H1 (cell line): ENCODE measurements at regions of chr1 and their contacts with region 1.

Region 1: DNA sequence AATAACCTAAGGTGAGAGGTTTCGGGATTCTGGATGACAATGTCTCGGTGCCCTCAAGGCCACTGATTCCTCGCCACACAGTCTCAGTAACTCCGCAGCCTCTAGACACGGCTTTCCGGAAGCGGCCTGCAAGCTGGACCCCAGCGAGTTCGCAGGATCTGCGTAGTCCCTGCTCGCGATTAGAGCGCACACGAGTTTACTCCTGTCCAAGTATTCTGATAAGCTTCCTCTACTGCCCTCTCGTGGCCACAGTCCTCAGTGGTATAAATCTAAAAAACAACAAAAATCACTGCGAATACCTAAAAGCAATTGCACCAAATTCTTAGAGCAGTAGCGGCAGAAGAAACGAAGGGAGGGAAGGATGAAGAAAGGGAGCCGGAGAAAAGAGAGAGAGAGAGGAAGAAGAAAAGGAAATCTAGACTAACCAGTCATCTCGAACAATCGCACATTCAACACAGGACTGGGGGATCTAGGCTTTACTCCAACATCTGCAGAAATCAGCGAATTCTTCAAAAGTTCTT is 1.1 kb upstream of the PLXNA2 start:
- DNase-seq: peak in 1 of 2 experiments; percentile 87
- H3K4me3 ChIP-seq: peak overlapping the region in 3 of 4 experiments; percentile 43 to 70 (median 44); a peak in 5 of 8 replicates
- H3K27ac ChIP-seq: no peak overlapping the region
- H3K4me1 ChIP-seq: peaks cover 0 to 11% (median 5%) of the 10 kb centered on the region in 4 experiments; a peak in 5 of 7 replicates
- H3K27me3 ChIP-seq: peaks cover 16 to 44% (median 36%) of the 10 kb centered on the region in 4 experiments
- CTCF ChIP-seq: peak; percentile 21 to 78 (median 76)
- EP300 ChIP-seq: no peak
- POLR2A ChIP-seq: no peak
- RAD21 ChIP-seq: peak; percentile 78 to 82

Region 2: GRCh38 chr1:208036109-208036808 is 209.0 kb before region 1 on chr1:
- CTCF ChIA-PET with region 1: interaction called, 315 read pairs
- POLR2A ChIA-PET with region 1: no interaction called
- DNase-seq: no peak
- H3K4me3 ChIP-seq: no peak overlapping the region
- H3K27ac ChIP-seq: no peak overlapping the region
- H3K4me1 ChIP-seq: peaks cover 0 to 3% (median 0%) of the 10 kb centered on the region in 4 experiments; a peak in 1 of 7 replicates
- H3K27me3 ChIP-seq: no peaks in the 10 kb centered on the region
- CTCF ChIP-seq: peak; percentile 34 to 69 (median 55)
- EP300 ChIP-seq: no peak
- POLR2A ChIP-seq: no peak
- RAD21 ChIP-seq: peak; percentile 60 to 68

Region 3: GRCh38 chr1:208093754-208094719 is 151.2 kb before region 1 on chr1:
- CTCF ChIA-PET with region 1: interaction called, 41 read pairs
- POLR2A ChIA-PET with region 1: no interaction called
- DNase-seq: peak; percentile 39 to 90
- H3K4me3 ChIP-seq: no peak overlapping the region
- H3K27ac ChIP-seq: no peak overlapping the region
- H3K4me1 ChIP-seq: peaks cover 1 to 7% (median 4%) of the 10 kb centered on the region in 4 experiments; a peak in 5 of 7 replicates
- H3K27me3 ChIP-seq: no peaks in the 10 kb centered on the region
- CTCF ChIP-seq: peak; percentile 88 to 94 (median 89)
- EP300 ChIP-seq: no peak
- POLR2A ChIP-seq: no peak
- RAD21 ChIP-seq: peak; percentile 76 to 85

Region 4: GRCh38 chr1:208115924-208116640 is 129.2 kb before region 1 on chr1:
- CTCF ChIA-PET with region 1: interaction called, 18 read pairs
- POLR2A ChIA-PET with region 1: no interaction called
- DNase-seq: no peak
- H3K4me3 ChIP-seq: no peak overlapping the region
- H3K27ac ChIP-seq: no peak overlapping the region
- H3K4me1 ChIP-seq: peaks cover 0 to 7% (median 2%) of the 10 kb centered on the region in 4 experiments; a peak in 5 of 7 replicates
- H3K27me3 ChIP-seq: 0 out of 7 replicates have a peak, but pooled peaks cover 0 to 3% (median 0%) of the 10 kb centered on the region in 4 experiments
- CTCF ChIP-seq: no peak
- EP300 ChIP-seq: no peak
- POLR2A ChIP-seq: no peak
- RAD21 ChIP-seq: no peak

Region 5: GRCh38 chr1:208233546-208233945 is 11.7 kb before region 1 on chr1:
- CTCF ChIA-PET with region 1: interaction called, 52 read pairs
- POLR2A ChIA-PET with region 1: interaction called, 8 read pairs
- DNase-seq: peak in 1 of 2 experiments; percentile 65
- H3K4me3 ChIP-seq: no peak overlapping the region
- H3K27ac ChIP-seq: no peak overlapping the region
- H3K4me1 ChIP-seq: peaks cover 4 to 32% (median 23%) of the 10 kb centered on the region in 4 experiments
- H3K27me3 ChIP-seq: no peaks in the 10 kb centered on the region
- CTCF ChIP-seq: no peak
- EP300 ChIP-seq: peak in 1 of 2 experiments; percentile 81; a peak in 1 of 3 replicates
- POLR2A ChIP-seq: no peak
- RAD21 ChIP-seq: peak in 1 of 2 experiments; percentile 23; a peak in 2 of 4 replicates

Region 6: GRCh38 chr1:208270651-208271111 is 25.4 kb after region 1 on chr1:
- CTCF ChIA-PET with region 1: interaction called, 13 read pairs
- POLR2A ChIA-PET with region 1: no interaction called
- DNase-seq: no peak
- H3K4me3 ChIP-seq: no peak overlapping the region
- H3K27ac ChIP-seq: no peak overlapping the region
- H3K4me1 ChIP-seq: peaks cover 0 to 3% (median 1%) of the 10 kb centered on the region in 4 experiments; a peak in 1 of 7 replicates
- H3K27me3 ChIP-seq: no peaks in the 10 kb centered on the region; a peak in 1 of 7 replicates
- CTCF ChIP-seq: no peak
- EP300 ChIP-seq: no peak
- POLR2A ChIP-seq: no peak
- RAD21 ChIP-seq: no peak